Dendritic cell treated with granulocyte-macrophage colony-stimulating factor and Interleukin-4, amounts not matched to agents 40 ng/mL and 50 ng/mL, for 4 days (primary cell): ENCODE measurements at regions of chr5 and their contacts with region 1.

Region 1: GRCh38 chr5:111092062-111092853 is at the start of gene WDR36:
- H3K4me3 Mint-ChIP-seq: peak within 1 kb of the TSS; percentile 82
- H3K27ac Mint-ChIP-seq: peak within 1 kb of the TSS; percentile 88
- H3K4me1 Mint-ChIP-seq: peaks cover 33% of the 10 kb centered on the region
- H3K27me3 Mint-ChIP-seq: no peaks in the 10 kb centered on the region

Region 2: DNA sequence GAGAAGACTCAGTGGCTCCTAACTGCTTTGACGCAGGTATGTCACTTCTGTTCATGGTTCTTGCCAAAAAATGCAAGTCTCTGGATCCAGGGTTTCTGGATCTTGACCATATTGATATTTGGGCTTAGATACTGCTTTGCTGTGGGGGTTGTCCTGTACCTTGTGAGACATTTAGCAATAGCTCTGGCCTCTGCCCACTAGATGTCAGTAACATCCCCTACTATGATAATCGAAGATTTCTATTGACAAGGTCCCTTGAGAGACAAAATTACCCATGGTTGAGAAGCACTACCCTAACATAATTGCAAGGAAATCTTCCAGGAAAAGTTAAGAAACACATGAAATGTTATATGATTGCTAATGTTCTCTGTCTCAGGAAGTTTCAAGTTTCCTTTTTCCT is 651.2 kb before region 1 on chr5:
- intact Hi-C with region 1: no loop called
- H3K4me3 Mint-ChIP-seq: no peak overlapping the region
- H3K27ac Mint-ChIP-seq: no peak overlapping the region
- H3K4me1 Mint-ChIP-seq: no peaks in the 10 kb centered on the region
- H3K27me3 Mint-ChIP-seq: no peaks in the 10 kb centered on the region

Region 3: DNA sequence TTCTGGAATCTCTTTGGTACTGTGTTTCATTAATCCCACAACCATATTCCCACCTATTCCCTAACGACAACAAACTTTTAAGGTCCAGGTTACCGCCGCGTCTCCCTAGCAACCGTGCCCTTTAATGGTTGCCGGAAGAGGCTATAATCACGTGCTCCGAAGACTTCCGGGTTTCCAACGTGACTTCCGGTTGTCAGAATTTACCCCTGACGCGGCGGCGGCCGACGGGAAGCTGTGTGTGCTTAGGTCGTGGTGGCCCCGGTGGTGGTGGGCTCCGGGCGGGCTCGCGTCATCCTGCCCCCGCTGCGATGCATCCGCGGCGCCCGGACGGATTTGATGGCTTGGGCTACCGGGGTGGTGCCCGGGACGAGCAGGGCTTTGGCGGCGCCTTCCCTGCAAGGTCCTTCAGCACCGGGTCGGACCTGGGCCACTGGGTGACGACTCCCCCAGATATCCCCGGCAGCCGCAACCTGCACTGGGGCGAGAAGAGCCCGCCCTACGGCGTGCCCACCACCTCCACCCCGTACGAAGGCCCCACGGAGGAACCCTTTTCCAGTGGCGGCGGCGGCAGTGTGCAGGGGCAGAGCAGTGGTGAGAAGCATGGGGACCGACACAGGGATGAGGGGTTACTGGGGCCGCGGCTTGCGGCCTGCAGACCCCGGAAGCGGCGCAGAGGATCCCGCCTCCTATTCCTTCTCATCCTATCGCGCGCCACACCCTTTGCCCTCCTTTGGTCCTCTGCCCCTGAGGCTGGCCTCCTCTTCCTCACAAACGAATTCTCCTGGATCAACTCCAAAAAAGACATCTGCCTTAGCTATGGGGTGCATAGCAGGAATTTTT is 353.2 kb before region 1 on chr5 and contains the start of gene SLC25A46:
- intact Hi-C with region 1: loop called (anchors 2 kb)
- H3K4me3 Mint-ChIP-seq: peak within 1 kb of the TSS; percentile 96
- H3K27ac Mint-ChIP-seq: peak within 1 kb of the TSS; percentile 95
- H3K4me1 Mint-ChIP-seq: peaks cover 33% of the 10 kb centered on the region
- H3K27me3 Mint-ChIP-seq: peaks cover 7% of the 10 kb centered on the region

Region 4: GRCh38 chr5:111113678-111114077 is 21.4 kb after region 1 on chr5:
- intact Hi-C with region 1: loop called (anchors 2 kb)
- H3K4me3 Mint-ChIP-seq: no peak overlapping the region
- H3K27ac Mint-ChIP-seq: peak overlapping the region; percentile 50
- H3K4me1 Mint-ChIP-seq: peaks cover 31% of the 10 kb centered on the region
- H3K27me3 Mint-ChIP-seq: no peaks in the 10 kb centered on the region

Region 5: GRCh38 chr5:111512375-111513130 is 420.3 kb after region 1 on chr5 and contains the start of gene STARD4:
- intact Hi-C with region 1: loop called (anchors 2 kb)
- H3K4me3 Mint-ChIP-seq: peak within 1 kb of the TSS; percentile 97
- H3K27ac Mint-ChIP-seq: peak within 1 kb of the TSS; percentile 96
- H3K4me1 Mint-ChIP-seq: peaks cover 31% of the 10 kb centered on the region
- H3K27me3 Mint-ChIP-seq: no peaks in the 10 kb centered on the region